CD4-positive, alpha-beta memory T cell (primary cell): ENCODE measurements at regions of chr20 and their contacts with region 1.

Region 1: DNA sequence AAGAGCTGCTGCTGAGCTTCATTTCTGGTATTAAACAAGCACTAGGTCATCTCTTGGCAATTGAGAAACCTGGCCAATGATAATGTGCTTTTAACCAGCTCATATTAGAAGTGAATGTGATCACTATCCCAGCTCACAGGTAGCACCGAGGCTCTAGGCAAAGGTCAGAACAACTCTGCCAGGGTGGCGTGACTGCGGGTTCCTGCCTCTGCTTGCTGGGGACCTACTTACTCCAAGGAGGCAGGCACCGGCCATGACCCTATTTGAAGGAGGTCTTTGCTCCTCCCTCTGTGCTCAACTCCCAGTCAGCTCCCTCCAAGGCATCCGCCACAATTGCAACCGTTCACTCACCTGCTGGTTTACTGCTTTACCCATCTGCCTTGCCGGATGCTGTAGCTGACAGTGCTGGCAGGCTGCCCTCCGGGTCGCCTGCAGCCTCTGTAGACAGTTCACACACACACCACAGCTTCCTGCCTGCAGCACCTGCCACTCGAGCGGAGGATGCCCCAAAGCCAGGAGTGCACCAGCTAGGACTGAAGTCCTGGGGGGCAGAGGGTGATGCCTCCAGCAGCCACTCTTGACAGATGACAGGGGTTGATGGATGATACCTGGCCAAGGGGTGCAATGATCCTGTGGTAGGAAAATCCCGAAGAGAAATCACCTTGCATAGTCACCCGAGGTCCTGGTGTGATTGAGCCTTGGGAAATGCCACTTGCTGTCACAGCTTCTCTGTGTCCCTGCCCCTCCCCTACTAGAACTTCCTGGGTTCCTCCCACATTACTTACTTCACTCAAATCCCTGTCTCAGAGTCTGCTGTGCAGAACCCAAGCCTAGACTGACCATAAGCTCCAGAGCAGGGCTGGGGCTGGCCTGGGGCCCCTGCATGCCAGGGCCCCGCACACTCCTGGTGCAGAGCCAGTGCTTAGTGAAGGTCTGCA is 8.8 kb upstream of the VSX1 start:
- DNase-seq: peak; percentile 80 to 87 (median 82)
- H3K4me3 ChIP-seq: peak overlapping the region in 1 of 2 donors; percentile 23
- H3K4me3 Mint-ChIP-seq: peak overlapping the region in 7 of 8 donors; percentile 40 to 87 (median 71)
- H3K27ac ChIP-seq: peak overlapping the region; percentile 30
- H3K27ac Mint-ChIP-seq: peak overlapping the region; percentile 60 to 92 (median 87)
- H3K4me1 ChIP-seq: peaks cover 37% of the 10 kb centered on the region
- H3K4me1 Mint-ChIP-seq: peaks cover 31 to 38% (median 35%) of the 10 kb centered on the region in 4 donors
- H3K27me3 ChIP-seq: peaks cover 3% of the 10 kb centered on the region
- H3K27me3 Mint-ChIP-seq: peaks cover under 1 to 5% of the 10 kb centered on the region in 2 donors

Region 2: DNA sequence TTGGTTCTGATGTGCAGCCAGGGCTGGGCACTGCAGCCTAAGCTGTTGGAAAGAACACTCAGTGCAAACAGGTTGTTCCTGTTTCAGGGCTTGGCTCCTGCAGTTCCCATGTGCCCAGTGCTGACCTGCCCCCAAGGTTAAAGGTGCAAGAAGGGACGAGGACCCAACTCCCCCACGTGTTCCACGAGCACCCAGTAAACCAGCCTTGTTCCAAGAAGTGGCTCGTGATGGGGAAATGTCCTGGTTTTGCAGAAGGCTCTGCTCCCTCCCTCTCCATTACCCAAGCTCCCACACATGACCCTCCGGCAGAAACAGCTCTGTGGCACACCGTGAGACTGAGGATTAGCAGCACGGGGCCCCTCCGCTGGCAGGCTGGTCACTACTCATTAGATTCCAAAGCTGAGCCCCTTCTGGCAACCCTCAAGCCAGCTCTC is 42.2 kb before region 1 on chr20:
- CTCF ChIA-PET with region 1: no interaction called
- POLR2A ChIA-PET with region 1: no interaction called
- intact Hi-C with region 1: no loop called
- DNase-seq: no peak
- H3K4me3 ChIP-seq: no peak overlapping the region
- H3K4me3 Mint-ChIP-seq: no peak overlapping the region
- H3K27ac ChIP-seq: no peak overlapping the region
- H3K27ac Mint-ChIP-seq: peak overlapping the region in 6 of 7 donors; percentile 34 to 92 (median 66)
- H3K4me1 ChIP-seq: peaks cover 18% of the 10 kb centered on the region
- H3K4me1 Mint-ChIP-seq: peaks cover 20 to 61% (median 45%) of the 10 kb centered on the region in 4 donors
- H3K27me3 ChIP-seq: no peaks in the 10 kb centered on the region
- H3K27me3 Mint-ChIP-seq: no peaks in the 10 kb centered on the region

Region 3: GRCh38 chr20:25065625-25066338 is 25.0 kb before region 1 on chr20:
- CTCF ChIA-PET with region 1: interaction called, 26 read pairs
- POLR2A ChIA-PET with region 1: interaction called, 11 read pairs
- intact Hi-C with region 1: no loop called
- DNase-seq: peak; percentile 66 to 70 (median 67)
- H3K4me3 ChIP-seq: no peak overlapping the region
- H3K4me3 Mint-ChIP-seq: no peak overlapping the region
- H3K27ac ChIP-seq: no peak overlapping the region
- H3K27ac Mint-ChIP-seq: peak overlapping the region in 2 of 7 donors; percentile 4 to 26
- H3K4me1 ChIP-seq: no peaks in the 10 kb centered on the region
- H3K4me1 Mint-ChIP-seq: peaks cover 4 to 8% (median 5%) of the 10 kb centered on the region in 4 donors
- H3K27me3 ChIP-seq: peaks cover 7% of the 10 kb centered on the region
- H3K27me3 Mint-ChIP-seq: peaks cover 16 to 18% of the 10 kb centered on the region in 2 donors

Region 4: GRCh38 chr20:25178563-25179438 is 88.0 kb after region 1 on chr20:
- CTCF ChIA-PET with region 1: interaction called, 4 read pairs
- POLR2A ChIA-PET with region 1: no interaction called
- intact Hi-C with region 1: loop called (anchors 1 kb)
- DNase-seq: peak; percentile 32 to 47 (median 44)
- H3K4me3 ChIP-seq: no peak overlapping the region
- H3K4me3 Mint-ChIP-seq: no peak overlapping the region
- H3K27ac ChIP-seq: no peak overlapping the region
- H3K27ac Mint-ChIP-seq: peak overlapping the region in 2 of 7 donors; percentile 69 to 78
- H3K4me1 ChIP-seq: no peaks in the 10 kb centered on the region
- H3K4me1 Mint-ChIP-seq: peaks cover 0 to 2% (median under 1%) of the 10 kb centered on the region in 4 donors
- H3K27me3 ChIP-seq: no peaks in the 10 kb centered on the region
- H3K27me3 Mint-ChIP-seq: peaks cover 4 to 6% of the 10 kb centered on the region in 2 donors

Region 5: DNA sequence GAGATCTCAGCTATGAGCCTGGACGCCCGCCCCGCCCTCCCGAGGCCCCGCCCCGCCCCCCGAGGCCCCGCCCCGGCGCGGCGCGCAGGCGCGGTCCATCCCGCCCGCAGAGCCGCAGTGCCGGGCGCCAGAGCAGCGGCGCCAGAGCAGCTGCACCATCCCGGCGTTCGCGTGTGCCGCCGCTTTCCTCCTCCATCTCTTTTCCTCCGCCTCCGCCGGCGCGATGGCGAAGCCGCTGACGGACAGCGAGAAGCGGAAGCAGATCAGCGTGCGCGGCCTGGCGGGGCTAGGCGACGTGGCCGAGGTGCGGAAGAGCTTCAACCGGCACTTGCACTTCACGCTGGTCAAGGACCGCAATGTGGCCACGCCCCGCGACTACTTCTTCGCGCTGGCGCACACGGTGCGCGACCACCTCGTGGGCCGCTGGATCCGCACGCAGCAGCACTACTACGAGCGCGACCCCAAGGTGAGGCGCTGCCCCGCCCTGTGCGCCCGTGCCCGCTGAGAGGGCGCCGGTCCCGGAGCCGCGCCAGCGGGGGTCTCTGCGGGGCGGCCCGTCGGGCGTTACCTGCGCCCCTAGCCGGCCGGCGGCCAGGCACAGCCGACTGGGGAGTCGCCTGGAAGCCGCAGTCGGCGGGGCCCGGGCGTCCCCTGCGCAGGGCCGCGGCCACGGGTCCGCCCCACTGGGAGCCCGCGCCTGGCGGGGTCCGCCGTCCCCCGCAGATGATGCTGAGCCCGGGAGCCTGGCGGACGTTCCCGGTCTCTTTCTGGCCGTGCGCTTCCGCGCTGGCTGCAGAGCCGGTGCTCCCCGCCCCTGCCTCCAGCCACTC is 157.4 kb after region 1 on chr20 and contains the start of gene PYGB:
- CTCF ChIA-PET with region 1: no interaction called
- POLR2A ChIA-PET with region 1: interaction called, 14 read pairs
- intact Hi-C with region 1: no loop called
- DNase-seq: peak; percentile 63 to 80 (median 72)
- H3K4me3 ChIP-seq: peak within 1 kb of the TSS; percentile 65 to 94
- H3K4me3 Mint-ChIP-seq: peak within 1 kb of the TSS; percentile 94 to 97 (median 95)
- H3K27ac ChIP-seq: peak within 1 kb of the TSS; percentile 59
- H3K27ac Mint-ChIP-seq: peak within 1 kb of the TSS; percentile 69 to 94 (median 92)
- H3K4me1 ChIP-seq: peaks cover 30% of the 10 kb centered on the region
- H3K4me1 Mint-ChIP-seq: peaks cover 25 to 55% (median 38%) of the 10 kb centered on the region in 4 donors
- H3K27me3 ChIP-seq: no peaks in the 10 kb centered on the region
- H3K27me3 Mint-ChIP-seq: peaks cover 0 to 2% of the 10 kb centered on the region in 2 donors
- total RNA-seq, gene PYGB: 34.0 to 35.6 TPM